Body of pancreas (tissue), 4 donors: ENCODE measurements at regions of chr1 and their contacts with region 1.

Region 1: DNA sequence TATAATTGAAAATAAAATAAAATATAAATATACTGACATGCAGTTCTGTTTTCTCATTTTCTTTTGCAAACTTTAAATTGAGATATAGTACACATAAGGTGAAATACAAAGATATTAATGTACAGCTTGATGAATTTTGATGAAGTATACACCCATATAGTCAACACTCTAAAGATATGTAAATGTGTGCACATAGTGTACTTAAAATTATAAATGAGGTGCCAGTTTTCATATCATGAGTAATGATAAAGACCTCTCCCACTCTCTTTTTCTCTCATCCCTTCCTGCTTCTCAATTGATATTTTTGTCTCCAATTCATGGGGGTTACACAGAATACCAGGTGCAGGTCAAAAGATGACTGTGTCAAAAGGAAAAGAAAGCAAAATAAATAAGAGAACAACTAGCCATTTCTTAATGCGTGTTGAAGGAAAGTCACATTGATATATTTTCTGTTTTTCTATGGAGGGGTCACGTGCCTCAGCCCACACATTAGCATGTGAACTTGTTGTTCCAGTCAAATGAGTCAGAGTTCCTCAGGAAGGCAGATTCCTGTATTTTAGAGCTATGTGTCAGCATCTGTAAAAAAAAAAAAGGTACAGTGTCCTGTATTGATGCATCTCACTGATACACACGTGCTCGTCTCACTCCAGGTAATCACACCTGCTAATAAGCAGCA is 64.3 kb upstream of the HOOK1 start:
- DNase-seq: peak in 2 of 4 donors; percentile 31 to 60
- ATAC-seq: peak; percentile 56
- H3K4me3 ChIP-seq: no peak overlapping the region
- H3K27ac ChIP-seq: peak overlapping the region in 1 of 4 donors; percentile 44
- H3K4me1 ChIP-seq: peaks cover 9% of the 10 kb centered on the region
- H3K27me3 ChIP-seq: no peaks in the 10 kb centered on the region
- CTCF ChIP-seq: no peak
- POLR2A ChIP-seq: no peak

Region 2: DNA sequence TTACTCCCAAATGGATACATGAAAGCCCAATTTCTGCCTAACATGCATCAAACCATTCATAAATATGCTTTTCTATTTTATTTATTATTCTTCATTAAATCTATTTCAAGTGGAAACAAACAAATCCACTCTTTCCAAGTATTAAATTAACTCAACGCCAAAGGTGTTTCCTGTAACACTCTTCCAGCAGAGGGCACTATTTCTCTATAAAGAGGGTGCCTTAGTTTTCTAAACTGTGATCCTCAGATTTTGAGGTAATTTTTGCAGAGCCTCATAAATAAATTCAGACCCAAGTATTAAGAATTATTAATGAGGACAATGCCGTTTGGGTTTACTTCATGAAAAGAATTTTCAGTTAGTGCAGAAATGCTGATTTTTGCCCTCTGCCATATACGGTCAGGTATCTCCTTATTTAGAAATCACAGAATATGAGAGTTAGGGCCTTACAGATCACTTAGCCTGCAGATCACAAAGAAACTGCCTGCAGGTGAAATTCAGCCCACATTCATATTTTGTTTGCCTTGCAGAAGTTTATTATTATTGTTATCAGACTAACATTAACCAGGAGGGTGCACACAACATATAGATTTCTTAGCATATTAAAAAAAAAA is 1010.5 kb before region 1 on chr1:
- intact Hi-C with region 1: loop called (anchors 5 kb)
- DNase-seq: peak in 2 of 4 donors; percentile 32 to 44
- ATAC-seq: peak; percentile 65
- H3K4me3 ChIP-seq: no peak overlapping the region
- H3K27ac ChIP-seq: no peak overlapping the region
- H3K4me1 ChIP-seq: no peaks in the 10 kb centered on the region
- H3K27me3 ChIP-seq: no peaks in the 10 kb centered on the region
- CTCF ChIP-seq: peak; percentile 50 to 95 (median 87)
- POLR2A ChIP-seq: no peak

Region 3: GRCh38 chr1:59285691-59286090 is 464.8 kb before region 1 on chr1:
- intact Hi-C with region 1: no loop called
- DNase-seq: no peak
- ATAC-seq: no peak
- H3K4me3 ChIP-seq: no peak overlapping the region
- H3K27ac ChIP-seq: no peak overlapping the region
- H3K4me1 ChIP-seq: peaks cover 9% of the 10 kb centered on the region
- H3K27me3 ChIP-seq: no peaks in the 10 kb centered on the region
- CTCF ChIP-seq: no peak
- POLR2A ChIP-seq: no peak